ENCODE measurements at regions of chr11 and their contacts with region 1.

Region 1: GRCh38 chr11:105244160-105244820 is 104.7 kb upstream of the CARD18 start:
- DNase-seq: peak; percentile 94
- H3K4me3 ChIP-seq: no peak overlapping the region
- H3K27ac ChIP-seq: peak overlapping the region; percentile 96
- H3K4me1 ChIP-seq: peaks cover 16% of the 10 kb centered on the region
- H3K27me3 ChIP-seq: no peaks in the 10 kb centered on the region
- CTCF ChIP-seq: no peak
- POLR2A ChIP-seq: no peak

Region 2: DNA sequence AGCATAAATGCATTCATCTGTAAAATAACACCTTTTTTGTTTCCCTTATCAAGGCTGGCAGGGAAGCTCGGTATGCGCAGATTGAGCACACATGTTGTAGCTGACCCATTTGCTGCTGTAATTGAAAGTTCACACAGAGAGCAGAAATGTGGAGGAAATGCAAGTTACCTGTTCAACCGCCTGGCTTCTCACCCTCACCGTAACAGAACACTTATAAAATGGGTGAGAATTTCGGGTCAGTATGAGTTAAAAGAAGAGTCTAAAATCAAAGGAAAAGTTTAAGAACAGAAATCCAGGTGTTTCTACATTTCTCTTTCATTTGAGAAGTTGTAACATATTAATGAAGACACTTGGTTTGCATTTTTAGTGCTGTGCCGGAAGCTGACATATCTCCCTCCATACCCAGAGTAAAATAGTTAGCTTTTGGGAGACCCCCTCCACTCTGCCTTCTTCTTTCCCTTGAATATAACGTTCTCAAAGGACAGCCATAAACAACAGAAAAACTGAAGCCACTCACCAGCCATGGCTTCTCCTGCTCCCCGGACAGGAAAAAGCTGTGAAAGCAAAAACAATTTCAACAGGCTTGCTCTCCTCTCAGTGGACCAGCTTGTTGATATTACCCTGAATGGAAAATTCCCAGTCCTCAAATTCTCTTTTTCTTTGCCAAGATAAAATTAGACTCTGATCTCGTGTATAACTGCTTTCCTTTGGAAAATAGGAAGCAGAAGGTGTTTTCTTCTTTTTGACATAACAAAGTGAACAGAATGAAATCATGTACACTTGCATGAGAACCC is 346.2 kb before region 1 on chr11 and contains the start of gene CASP12:
- CTCF ChIA-PET with region 1: no interaction called
- POLR2A ChIA-PET with region 1: no interaction called
- dilution Hi-C with region 1: no loop called
- intact Hi-C with region 1: loop called (anchors 1 kb)
- DNase-seq: peak; percentile 97
- H3K4me3 ChIP-seq: peak within 1 kb of the TSS in 2 of 3 experiments; percentile 23 to 41
- H3K27ac ChIP-seq: peak within 1 kb of the TSS; percentile 74
- H3K4me1 ChIP-seq: peaks cover 30% of the 10 kb centered on the region
- H3K27me3 ChIP-seq: no peaks in the 10 kb centered on the region
- CTCF ChIP-seq: no peak
- POLR2A ChIP-seq: peak; percentile 14
- total RNA-seq, gene CASP12: 2.6 and 3.9 TPM in 2 replicates

Region 3: GRCh38 chr11:105005446-105005845 is 238.8 kb before region 1 on chr11:
- CTCF ChIA-PET with region 1: no interaction called
- POLR2A ChIA-PET with region 1: no interaction called
- dilution Hi-C with region 1: no loop called
- intact Hi-C with region 1: loop called (anchors 1 kb)
- DNase-seq: no peak
- H3K4me3 ChIP-seq: no peak overlapping the region
- H3K27ac ChIP-seq: peak overlapping the region; percentile 34
- H3K4me1 ChIP-seq: peaks cover 12% of the 10 kb centered on the region
- H3K27me3 ChIP-seq: no peaks in the 10 kb centered on the region
- CTCF ChIP-seq: no peak
- POLR2A ChIP-seq: no peak

Region 4: DNA sequence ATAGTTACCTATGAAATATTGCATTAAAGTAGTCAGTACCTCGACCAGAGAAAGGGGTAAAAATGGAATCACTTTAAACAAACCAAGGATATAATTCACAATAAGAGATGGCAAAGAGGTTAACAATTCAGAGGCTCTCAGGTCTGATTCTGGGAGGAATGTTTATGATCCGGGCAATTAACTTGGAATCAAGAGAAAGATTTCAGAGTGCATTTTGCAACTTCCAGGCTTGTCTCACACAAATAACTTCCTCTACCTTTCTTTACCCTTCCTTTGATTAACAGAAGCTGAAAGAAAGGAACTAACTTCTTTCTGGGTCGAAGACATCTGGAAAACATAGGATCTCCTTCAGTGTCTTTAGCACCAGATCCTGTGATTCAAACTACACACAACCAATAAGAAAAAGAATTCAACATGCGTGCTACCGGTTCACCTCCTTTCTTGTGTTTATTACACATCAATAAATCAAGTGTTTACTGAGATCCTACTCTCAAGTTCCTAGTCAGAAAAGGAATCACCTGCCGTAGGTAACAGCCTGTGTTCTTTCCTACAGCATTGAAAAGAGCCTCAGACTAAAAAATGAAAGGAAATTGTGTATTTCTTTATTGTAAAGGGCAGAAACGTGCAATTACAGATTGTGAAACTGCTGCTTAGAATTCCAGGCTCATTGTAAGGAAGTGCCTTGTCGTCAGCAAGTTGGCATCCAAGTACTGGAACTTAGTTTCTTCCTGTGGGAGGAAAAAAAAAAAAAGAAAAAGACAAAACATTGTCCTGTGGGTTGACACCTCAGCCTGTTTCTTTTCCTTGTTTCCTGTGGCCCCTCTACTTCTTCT is 134.2 kb before region 1 on chr11:
- CTCF ChIA-PET with region 1: no interaction called
- POLR2A ChIA-PET with region 1: no interaction called
- dilution Hi-C with region 1: no loop called
- intact Hi-C with region 1: loop called (anchors 1 kb)
- DNase-seq: peak; percentile 72
- H3K4me3 ChIP-seq: peak overlapping the region in 1 of 3 experiments; percentile 33
- H3K27ac ChIP-seq: peak overlapping the region; percentile 81
- H3K4me1 ChIP-seq: peaks cover 17% of the 10 kb centered on the region
- H3K27me3 ChIP-seq: no peaks in the 10 kb centered on the region
- CTCF ChIP-seq: no peak
- POLR2A ChIP-seq: peak; percentile 9

Region 5: DNA sequence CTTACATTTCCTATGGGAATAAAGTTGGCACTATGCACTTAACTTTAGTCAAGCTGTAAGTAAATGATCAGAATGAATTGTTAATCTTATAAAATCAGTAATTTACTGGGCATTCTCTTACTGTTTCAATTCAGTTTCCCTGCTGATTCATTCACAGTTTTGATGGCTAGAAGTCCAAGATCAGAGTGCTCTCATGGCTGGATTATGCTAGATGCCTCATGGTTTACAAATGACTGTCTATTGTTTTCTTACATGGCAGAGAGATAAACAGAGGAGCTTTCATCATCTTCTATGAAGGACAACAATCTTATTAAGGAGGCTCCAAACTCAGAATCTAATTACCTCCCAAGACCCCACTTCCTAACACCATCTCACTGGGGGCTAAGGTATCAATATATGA is 30.3 kb after region 1 on chr11:
- CTCF ChIA-PET with region 1: no interaction called
- POLR2A ChIA-PET with region 1: no interaction called
- dilution Hi-C with region 1: no loop called
- intact Hi-C with region 1: no loop called
- DNase-seq: no peak
- H3K4me3 ChIP-seq: no peak overlapping the region
- H3K27ac ChIP-seq: no peak overlapping the region
- H3K4me1 ChIP-seq: no peaks in the 10 kb centered on the region
- H3K27me3 ChIP-seq: no peaks in the 10 kb centered on the region
- CTCF ChIP-seq: no peak
- POLR2A ChIP-seq: no peak

Region 6: GRCh38 chr11:105297463-105297862 is 53.2 kb after region 1 on chr11:
- CTCF ChIA-PET with region 1: no interaction called
- POLR2A ChIA-PET with region 1: no interaction called
- dilution Hi-C with region 1: no loop called
- intact Hi-C with region 1: loop called (anchors 5 kb)
- DNase-seq: peak; percentile 66
- H3K4me3 ChIP-seq: no peak overlapping the region
- H3K27ac ChIP-seq: peak overlapping the region; percentile 29
- H3K4me1 ChIP-seq: peaks cover 14% of the 10 kb centered on the region
- H3K27me3 ChIP-seq: no peaks in the 10 kb centered on the region
- CTCF ChIP-seq: no peak
- POLR2A ChIP-seq: no peak

Measured in endothelial cell of umbilical vein (primary cell).